A549 (cell line): ENCODE measurements at regions of chr17 and their contacts with region 1.

Region 1: DNA sequence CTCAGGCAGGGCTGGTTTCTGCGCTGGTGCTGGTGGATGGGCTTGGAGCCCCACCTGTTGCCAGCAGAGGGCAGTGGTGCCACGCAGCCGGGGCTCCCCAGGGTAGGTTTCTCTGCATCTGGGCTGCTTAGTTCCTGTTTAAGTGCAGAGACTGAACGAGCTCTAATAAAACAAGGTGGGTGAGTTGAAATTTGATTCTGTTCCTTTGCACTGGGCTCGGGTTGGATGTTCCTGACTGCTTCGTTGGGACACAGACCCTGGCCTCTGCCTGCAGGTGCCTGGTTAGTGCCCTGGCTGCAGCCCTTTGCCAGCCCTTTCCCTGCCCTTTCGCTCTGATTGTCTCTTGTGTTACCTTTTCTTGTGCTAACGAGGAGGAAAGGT is 30.0 kb downstream of the TBCD start:
- DNase-seq: peak; percentile 72 to 99
- ATAC-seq: peak; percentile 97 to 98
- H3K4me3 ChIP-seq: no peak overlapping the region
- H3K27ac ChIP-seq: no peak overlapping the region
- H3K4me1 ChIP-seq: no peaks in the 10 kb centered on the region
- CTCF ChIP-seq: peak; percentile 99
- EP300 ChIP-seq: no peak
- POLR2A ChIP-seq: no peak
- RAD21 ChIP-seq: peak; percentile 97 to 98

Region 2: DNA sequence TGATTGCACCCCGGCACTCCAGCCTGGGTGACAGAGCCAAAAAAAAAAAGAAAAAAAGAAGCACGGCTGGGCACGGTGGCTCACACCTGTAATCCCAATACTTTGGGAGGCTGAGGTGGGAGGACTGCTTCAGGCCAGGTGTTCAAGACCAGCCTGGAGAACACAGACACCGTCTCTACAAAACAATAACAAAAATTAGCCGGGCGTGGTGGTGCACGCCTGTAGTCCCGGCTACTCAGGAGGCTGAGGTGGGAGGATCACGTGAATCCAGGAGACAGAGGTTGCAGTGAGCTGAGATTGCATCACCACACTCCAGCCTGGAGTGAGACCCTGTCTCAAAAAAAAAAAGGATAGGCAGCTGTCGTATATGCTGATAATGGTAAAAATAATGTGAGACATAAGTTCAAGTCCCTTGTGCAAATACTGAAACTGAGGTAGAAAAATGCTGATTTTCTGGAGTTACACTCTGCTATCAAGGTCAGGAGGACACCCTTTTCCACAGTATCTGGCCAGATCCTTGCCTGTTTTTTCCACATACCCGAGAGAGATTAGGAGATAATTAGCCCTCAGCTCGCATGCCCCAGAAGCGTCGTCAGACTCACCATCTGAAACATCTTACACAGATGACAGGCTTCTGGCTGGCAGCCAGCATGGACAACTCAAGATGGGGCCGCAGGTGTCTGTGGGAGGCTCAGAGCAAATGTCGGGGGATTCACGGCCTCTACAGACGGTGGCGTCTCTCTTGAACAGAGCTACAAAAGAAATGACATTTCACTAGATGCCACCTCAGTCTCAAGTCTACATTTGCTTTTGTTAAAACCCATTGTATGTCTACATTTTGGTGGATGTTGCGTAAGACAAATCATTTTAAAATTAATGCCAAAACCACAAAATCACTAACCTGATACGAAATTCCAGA is 170.5 kb before region 1 on chr17:
- CTCF ChIA-PET with region 1: no interaction called
- POLR2A ChIA-PET with region 1: no interaction called
- DNase-seq: no peak
- ATAC-seq: no peak
- H3K4me3 ChIP-seq: no peak overlapping the region
- H3K27ac ChIP-seq: no peak overlapping the region
- H3K4me1 ChIP-seq: no peaks in the 10 kb centered on the region
- CTCF ChIP-seq: no peak
- EP300 ChIP-seq: no peak
- POLR2A ChIP-seq: no peak
- RAD21 ChIP-seq: no peak

Region 3: DNA sequence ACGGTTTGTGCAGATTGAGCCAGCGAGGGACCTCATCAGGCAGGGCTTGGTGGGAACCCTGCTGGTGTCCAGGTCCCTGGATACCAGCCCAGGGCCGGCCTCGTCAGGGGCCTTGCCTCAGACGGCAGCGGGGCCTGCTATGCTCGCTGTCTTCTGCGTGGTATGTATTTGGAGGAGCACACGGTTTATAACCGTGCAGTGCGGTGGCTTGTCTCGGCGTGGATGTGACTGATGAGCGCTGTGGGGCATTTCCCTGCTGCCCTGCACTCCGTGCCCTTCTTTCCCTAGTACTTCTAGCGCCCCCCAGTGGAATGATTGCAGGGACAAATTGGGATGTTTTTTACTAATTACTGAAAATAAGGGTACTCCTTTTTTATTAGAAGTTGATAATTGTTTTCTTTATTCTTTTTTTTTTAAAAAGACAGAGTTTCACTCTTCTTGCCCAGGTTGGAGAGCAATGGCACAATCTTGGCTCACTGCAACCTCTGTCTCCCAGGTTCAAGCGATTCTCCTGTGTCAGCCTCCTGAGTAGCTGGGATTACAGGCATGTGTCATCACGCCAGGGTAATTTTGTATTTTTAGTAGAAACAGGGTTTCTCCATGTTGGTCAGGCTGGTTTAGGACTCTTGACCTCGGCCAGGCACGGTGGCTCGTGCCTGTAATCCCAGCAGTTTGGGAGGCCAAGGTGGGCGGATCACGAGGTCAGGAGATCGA is 14.7 kb before region 1 on chr17:
- CTCF ChIA-PET with region 1: interaction called, 106 read pairs
- POLR2A ChIA-PET with region 1: no interaction called
- DNase-seq: peak; percentile 57 to 65
- ATAC-seq: peak; percentile 54 to 79; a peak in 4 of 6 replicates
- H3K4me3 ChIP-seq: no peak overlapping the region
- H3K27ac ChIP-seq: no peak overlapping the region
- H3K4me1 ChIP-seq: no peaks in the 10 kb centered on the region
- CTCF ChIP-seq: peak; percentile 84
- EP300 ChIP-seq: no peak
- POLR2A ChIP-seq: no peak
- RAD21 ChIP-seq: peak; percentile 76 to 83

Region 4: DNA sequence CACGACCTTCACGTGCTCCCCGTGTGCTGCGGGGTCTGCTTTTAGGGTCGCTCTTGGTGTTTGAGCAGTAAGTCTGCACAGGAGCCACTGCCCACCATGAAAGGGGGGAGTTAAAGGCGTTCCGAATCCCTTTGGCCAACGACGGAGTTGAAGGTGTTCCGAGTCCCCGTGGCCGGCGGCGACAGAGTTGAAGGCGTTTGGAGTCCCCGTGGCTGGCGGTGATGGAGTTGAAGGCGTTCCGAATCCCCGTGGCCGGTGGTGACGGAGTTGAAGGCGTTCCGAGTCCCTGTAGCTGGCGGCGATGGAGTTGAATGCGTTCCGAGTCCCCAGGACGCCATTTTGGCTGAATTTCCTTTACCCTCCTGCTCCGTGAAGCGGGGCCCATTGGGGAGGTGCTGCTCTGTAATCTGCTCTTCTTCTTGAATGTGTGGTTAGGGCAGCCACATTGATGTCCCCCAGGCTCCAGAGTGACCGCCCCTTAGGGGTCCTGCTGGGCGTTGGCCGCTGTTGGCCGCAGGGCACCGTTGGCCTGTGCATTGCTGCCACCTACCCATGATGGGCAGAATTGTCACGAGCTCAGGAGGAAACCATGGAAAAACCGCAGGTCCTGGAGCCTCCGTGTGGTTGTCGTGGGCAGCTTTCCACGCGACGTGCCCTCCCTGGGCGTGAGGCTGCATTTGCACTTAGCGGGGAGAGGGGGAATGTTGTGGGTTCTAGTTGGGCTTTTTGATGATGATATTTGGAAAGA is 131.6 kb after region 1 on chr17:
- CTCF ChIA-PET with region 1: interaction called, 10 read pairs
- POLR2A ChIA-PET with region 1: no interaction called
- DNase-seq: peak; percentile 31
- ATAC-seq: peak in 1 of 2 experiments; percentile 50; a peak in 3 of 6 replicates
- H3K4me3 ChIP-seq: no peak overlapping the region
- H3K27ac ChIP-seq: no peak overlapping the region
- H3K4me1 ChIP-seq: no peaks in the 10 kb centered on the region
- CTCF ChIP-seq: peak; percentile 18; the same call in 2 of the 3 replicates
- EP300 ChIP-seq: no peak
- POLR2A ChIP-seq: no peak
- RAD21 ChIP-seq: peak in 1 of 2 experiments; percentile 54; a peak in 2 of 5 replicates